ENCODE measurements at regions of chr6 and their contacts with region 1.

Region 1: DNA sequence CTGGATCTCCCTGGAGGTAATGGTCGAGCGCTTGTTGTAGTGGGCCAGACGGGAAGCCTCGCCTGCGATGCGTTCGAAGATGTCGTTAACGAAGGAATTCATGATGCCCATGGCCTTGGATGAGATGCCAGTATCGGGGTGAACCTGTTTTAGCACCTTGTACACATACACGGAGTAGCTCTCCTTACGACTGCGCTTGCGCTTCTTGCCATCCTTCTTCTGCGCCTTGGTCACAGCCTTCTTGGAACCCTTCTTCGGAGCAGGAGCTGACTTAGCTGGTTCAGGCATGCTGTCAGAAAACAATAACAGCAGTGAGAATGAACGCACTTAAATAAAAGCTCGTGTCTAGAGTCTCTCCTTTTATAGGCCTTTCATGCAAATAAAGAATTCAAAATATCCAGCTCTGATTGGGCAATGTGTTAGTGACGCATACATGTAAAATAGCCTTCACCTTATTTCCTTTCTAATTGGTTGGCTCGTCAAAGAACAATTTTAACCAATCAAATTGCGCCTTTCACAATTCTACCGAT is 129.2 kb downstream of the HFE start:
- DNase-seq: peak; percentile 70
- H3K4me3 ChIP-seq: peak overlapping the region; percentile 69
- H3K27ac ChIP-seq: peak overlapping the region; percentile 92 to 98
- H3K4me1 ChIP-seq: peaks cover 0 to 3% of the 10 kb centered on the region in 2 experiments; a peak in 1 of 4 replicates
- H3K27me3 ChIP-seq: no peaks in the 10 kb centered on the region
- CTCF ChIP-seq: no peak
- EP300 ChIP-seq: no peak
- RAD21 ChIP-seq: no peak

Region 2: DNA sequence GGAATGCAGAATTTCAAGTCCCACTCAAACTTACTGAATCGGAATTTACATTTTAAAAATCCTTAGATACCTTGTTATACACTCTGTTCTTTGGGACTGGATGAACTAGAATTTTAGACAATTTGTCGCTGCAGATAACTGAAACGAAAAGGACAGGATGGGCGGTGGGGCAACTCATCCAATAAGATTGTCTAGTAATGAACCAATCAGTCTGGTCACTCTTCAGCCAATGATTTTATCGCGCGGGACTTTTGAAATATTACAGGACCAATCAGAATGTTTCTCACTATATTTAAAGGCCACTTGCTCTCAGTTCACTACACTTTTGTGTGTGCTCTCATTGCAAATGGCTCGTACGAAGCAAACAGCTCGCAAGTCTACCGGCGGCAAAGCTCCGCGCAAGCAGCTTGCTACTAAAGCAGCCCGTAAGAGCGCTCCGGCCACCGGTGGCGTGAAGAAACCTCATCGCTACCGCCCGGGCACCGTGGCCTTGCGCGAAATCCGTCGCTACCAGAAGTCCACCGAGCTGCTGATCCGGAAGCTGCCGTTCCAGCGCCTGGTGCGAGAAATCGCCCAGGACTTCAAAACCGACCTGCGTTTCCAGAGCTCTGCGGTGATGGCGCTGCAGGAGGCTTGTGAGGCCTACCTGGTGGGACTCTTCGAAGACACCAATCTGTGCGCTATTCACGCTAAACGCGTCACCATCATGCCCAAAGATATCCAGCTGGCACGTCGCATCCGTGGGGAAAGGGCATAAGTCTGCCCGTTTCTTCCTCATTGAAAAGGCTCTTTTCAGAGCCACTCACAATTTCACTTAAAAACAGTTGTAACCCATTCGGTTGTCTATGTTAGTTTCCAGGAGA is 171.1 kb before region 1 on chr6:
- CTCF ChIA-PET with region 1: no interaction called
- POLR2A ChIA-PET with region 1: interaction called, 31 read pairs
- DNase-seq: peak; percentile 77
- H3K4me3 ChIP-seq: peak overlapping the region; percentile 57 to 60
- H3K27ac ChIP-seq: peak overlapping the region; percentile 79 to 97
- H3K4me1 ChIP-seq: peaks cover 0 to 12% of the 10 kb centered on the region in 2 experiments; a peak in 2 of 4 replicates
- H3K27me3 ChIP-seq: no peaks in the 10 kb centered on the region
- CTCF ChIP-seq: peak; percentile 37
- EP300 ChIP-seq: peak in 1 of 2 experiments; percentile 49; a peak in 1 of 4 replicates
- RAD21 ChIP-seq: no peak

Region 3: DNA sequence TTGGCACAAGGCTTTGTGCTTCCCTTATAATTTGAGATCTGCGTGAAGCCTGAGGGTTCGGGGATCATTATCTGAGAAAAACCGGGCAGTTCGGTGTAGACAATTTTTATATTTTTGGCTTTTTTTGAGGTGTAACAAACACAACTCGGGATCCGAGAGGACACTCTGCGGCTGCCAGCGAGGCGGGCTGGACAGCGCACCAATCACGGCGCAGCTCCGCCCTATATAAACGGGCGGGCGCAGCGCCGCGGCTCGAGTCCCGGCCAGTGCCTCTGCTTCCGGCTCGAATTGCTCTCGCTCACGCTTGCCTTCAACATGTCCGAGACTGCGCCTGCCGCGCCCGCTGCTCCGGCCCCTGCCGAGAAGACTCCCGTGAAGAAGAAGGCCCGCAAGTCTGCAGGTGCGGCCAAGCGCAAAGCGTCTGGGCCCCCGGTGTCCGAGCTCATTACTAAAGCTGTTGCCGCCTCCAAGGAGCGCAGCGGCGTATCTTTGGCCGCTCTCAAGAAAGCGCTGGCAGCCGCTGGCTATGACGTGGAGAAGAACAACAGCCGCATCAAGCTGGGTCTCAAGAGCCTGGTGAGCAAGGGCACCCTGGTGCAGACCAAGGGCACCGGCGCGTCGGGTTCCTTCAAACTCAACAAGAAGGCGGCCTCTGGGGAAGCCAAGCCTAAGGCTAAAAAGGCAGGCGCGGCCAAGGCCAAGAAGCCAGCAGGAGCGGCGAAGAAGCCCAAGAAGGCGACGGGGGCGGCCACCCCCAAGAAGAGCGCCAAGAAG is 60.2 kb before region 1 on chr6:
- CTCF ChIA-PET with region 1: no interaction called
- POLR2A ChIA-PET with region 1: interaction called, 44 read pairs
- DNase-seq: peak; percentile 88
- H3K4me3 ChIP-seq: peak overlapping the region; percentile 82 to 90
- H3K27ac ChIP-seq: peak overlapping the region; percentile 88 to 97
- H3K4me1 ChIP-seq: no peaks in the 10 kb centered on the region; a peak in 3 of 4 replicates
- H3K27me3 ChIP-seq: no peaks in the 10 kb centered on the region
- CTCF ChIP-seq: no peak
- EP300 ChIP-seq: peak in 1 of 2 experiments; percentile 60; a peak in 1 of 4 replicates
- RAD21 ChIP-seq: no peak

Region 4: GRCh38 chr6:26196846-26197648 is 19.4 kb before region 1 on chr6:
- CTCF ChIA-PET with region 1: interaction called, 3 read pairs
- POLR2A ChIA-PET with region 1: interaction called, 144 read pairs
- DNase-seq: peak; percentile 81
- H3K4me3 ChIP-seq: peak overlapping the region; percentile 84 to 96
- H3K27ac ChIP-seq: peak overlapping the region; percentile 87 to 94
- H3K4me1 ChIP-seq: peaks cover 12 to 16% of the 10 kb centered on the region in 2 experiments; a peak in 3 of 4 replicates
- H3K27me3 ChIP-seq: no peaks in the 10 kb centered on the region
- CTCF ChIP-seq: peak; percentile 19; the same call in 1 of the 2 replicates
- EP300 ChIP-seq: peak in 1 of 2 experiments; percentile 43; a peak in 1 of 4 replicates
- RAD21 ChIP-seq: no peak

Region 5: GRCh38 chr6:26249957-26250697 is 33.7 kb after region 1 on chr6:
- CTCF ChIA-PET with region 1: interaction called, 12 read pairs
- POLR2A ChIA-PET with region 1: interaction called, 91 read pairs
- DNase-seq: peak; percentile 58
- H3K4me3 ChIP-seq: peak overlapping the region; percentile 88 to 92
- H3K27ac ChIP-seq: peak overlapping the region; percentile 85 to 97
- H3K4me1 ChIP-seq: peaks cover 0 to 7% of the 10 kb centered on the region in 2 experiments; a peak in 3 of 4 replicates
- H3K27me3 ChIP-seq: no peaks in the 10 kb centered on the region
- CTCF ChIP-seq: peak; percentile 54
- EP300 ChIP-seq: 0 out of 4 replicates have a peak, but pooled peaks of 1 of the 2 experiments have one; percentile 12
- RAD21 ChIP-seq: no peak; the same call in 1 of the 2 replicates

Region 6: DNA sequence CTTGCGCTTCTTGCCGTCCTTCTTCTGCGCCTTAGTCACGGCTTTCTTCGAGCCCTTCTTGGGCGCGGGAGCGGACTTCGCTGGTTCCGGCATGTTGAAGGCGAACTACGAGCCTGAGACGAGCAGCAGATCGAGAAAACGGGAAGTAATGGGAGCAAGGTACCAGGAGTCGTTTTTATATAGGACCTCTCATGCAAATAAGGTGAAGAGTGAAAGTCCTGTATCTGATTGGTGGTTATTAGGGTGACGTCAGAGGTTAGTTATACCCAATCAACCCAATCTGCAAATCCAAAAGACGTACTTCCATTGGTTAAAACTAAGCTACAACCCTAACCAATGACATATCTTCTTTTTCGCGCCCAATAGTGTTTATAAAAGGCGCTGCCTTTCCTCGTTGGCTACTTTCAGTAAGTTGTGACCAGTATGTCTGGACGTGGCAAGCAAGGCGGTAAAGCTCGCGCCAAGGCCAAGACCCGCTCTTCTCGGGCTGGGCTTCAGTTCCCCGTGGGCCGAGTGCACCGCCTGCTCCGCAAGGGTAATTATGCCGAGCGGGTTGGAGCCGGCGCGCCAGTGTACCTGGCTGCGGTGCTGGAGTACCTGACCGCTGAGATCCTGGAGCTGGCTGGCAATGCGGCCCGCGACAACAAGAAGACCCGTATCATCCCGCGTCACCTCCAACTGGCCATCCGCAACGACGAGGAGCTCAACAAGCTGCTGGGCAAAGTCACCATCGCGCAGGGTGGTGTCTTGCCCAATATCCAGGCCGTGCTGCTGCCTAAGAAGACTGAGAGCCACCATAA is 930.5 kb after region 1 on chr6:
- CTCF ChIA-PET with region 1: no interaction called
- POLR2A ChIA-PET with region 1: interaction called, 10 read pairs
- DNase-seq: peak; percentile 91
- H3K4me3 ChIP-seq: peak overlapping the region; percentile 66 to 94
- H3K27ac ChIP-seq: peak overlapping the region; percentile 94 to 96
- H3K4me1 ChIP-seq: peaks cover 0 to 8% of the 10 kb centered on the region in 2 experiments; a peak in 2 of 4 replicates
- H3K27me3 ChIP-seq: no peaks in the 10 kb centered on the region
- CTCF ChIP-seq: no peak
- EP300 ChIP-seq: peak in 1 of 2 experiments; percentile 32; a peak in 1 of 4 replicates
- RAD21 ChIP-seq: no peak

Region 7: DNA sequence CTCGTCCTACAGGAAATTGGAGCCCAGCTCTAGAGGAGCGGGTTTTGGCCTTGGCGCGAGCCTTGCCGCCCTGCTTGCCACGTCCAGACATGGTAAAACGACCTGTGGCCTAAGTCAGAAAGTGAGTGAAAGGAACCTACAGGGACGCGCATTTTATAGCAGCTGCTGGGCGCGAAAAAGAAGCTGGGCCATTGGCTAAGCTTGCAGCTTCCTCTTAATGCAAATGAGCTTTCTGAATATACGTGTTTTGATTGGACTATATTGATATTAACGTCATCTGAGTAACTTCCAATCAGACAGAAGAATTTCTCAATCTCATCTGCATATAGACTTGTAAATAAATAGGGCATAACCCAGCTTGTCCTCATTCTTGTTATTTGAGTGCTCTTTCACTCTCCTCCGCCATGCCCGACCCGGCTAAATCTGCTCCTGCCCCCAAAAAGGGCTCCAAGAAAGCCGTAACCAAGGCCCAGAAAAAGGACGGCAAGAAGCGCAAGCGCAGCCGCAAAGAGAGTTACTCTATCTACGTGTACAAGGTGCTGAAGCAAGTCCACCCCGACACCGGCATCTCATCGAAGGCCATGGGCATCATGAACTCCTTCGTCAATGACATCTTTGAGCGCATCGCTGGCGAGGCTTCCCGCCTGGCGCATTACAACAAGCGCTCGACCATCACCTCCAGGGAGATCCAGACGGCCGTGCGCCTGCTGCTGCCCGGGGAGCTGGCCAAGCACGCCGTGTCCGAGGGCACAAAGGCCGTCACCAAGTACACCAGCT is 1676.8 kb after region 1 on chr6:
- CTCF ChIA-PET with region 1: no interaction called
- POLR2A ChIA-PET with region 1: interaction called, 12 read pairs
- DNase-seq: peak; percentile 81
- H3K4me3 ChIP-seq: peak overlapping the region; percentile 75 to 93
- H3K27ac ChIP-seq: peak overlapping the region; percentile 84 to 98
- H3K4me1 ChIP-seq: peaks cover 11 to 21% of the 10 kb centered on the region in 2 experiments; a peak in 3 of 4 replicates
- H3K27me3 ChIP-seq: no peaks in the 10 kb centered on the region
- CTCF ChIP-seq: no peak
- EP300 ChIP-seq: 0 out of 4 replicates have a peak, but pooled peaks of 1 of the 2 experiments have one; percentile 68
- RAD21 ChIP-seq: no peak